ENCODE measurements at regions of chr1 and their contacts with region 1.

Region 1: GRCh38 chr1:85259118-85259911 is at the start of gene C1orf52:
- DNase-seq: peak; percentile 84
- ATAC-seq: peak; percentile 96
- H3K4me3 ChIP-seq: peak within 1 kb of the TSS; percentile 83 to 84
- H3K27ac ChIP-seq: peak within 1 kb of the TSS; percentile 43
- H3K4me1 ChIP-seq: peaks cover 8 to 20% of the 10 kb centered on the region in 2 experiments; a peak in 3 of 4 replicates
- H3K27me3 ChIP-seq: no peaks in the 10 kb centered on the region
- CTCF ChIP-seq: peak; percentile 83 to 93 (median 93)
- POLR2A ChIP-seq: peak; percentile 63
- RAD21 ChIP-seq: peak; percentile 76
- total RNA-seq, gene C1orf52: 23.3 TPM

Region 2: DNA sequence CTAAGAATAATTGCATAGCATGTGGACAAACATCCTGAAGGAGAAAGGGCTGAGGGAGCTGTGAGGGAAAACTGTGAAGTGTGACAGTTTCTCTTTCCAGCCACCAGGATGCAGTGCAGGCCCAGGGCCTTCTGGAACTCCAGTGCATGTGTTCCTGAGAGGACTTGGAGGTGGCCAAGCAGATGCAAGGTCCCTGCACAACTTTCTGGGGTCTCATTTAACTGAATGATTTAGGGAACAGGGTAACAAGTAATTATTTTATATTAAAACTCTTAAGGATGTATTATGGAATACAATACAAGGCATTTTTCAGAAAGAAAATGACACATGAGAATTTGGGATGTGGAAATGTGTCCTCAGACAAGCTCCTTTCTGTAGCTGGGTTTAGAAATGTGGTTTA is 149.8 kb before region 1 on chr1:
- CTCF ChIA-PET with region 1: interaction called, 65 read pairs
- POLR2A ChIA-PET with region 1: no interaction called
- RAD21 ChIA-PET with region 1: interaction called, 4 to 13 read pairs
- intact Hi-C with region 1: loop called (anchors 1 kb)
- DNase-seq: peak; percentile 53
- ATAC-seq: peak; percentile 100
- H3K4me3 ChIP-seq: no peak overlapping the region
- H3K27ac ChIP-seq: no peak overlapping the region
- H3K4me1 ChIP-seq: no peaks in the 10 kb centered on the region
- H3K27me3 ChIP-seq: no peaks in the 10 kb centered on the region
- CTCF ChIP-seq: peak; percentile 77 to 86 (median 85)
- POLR2A ChIP-seq: no peak
- RAD21 ChIP-seq: peak; percentile 89

Region 3: DNA sequence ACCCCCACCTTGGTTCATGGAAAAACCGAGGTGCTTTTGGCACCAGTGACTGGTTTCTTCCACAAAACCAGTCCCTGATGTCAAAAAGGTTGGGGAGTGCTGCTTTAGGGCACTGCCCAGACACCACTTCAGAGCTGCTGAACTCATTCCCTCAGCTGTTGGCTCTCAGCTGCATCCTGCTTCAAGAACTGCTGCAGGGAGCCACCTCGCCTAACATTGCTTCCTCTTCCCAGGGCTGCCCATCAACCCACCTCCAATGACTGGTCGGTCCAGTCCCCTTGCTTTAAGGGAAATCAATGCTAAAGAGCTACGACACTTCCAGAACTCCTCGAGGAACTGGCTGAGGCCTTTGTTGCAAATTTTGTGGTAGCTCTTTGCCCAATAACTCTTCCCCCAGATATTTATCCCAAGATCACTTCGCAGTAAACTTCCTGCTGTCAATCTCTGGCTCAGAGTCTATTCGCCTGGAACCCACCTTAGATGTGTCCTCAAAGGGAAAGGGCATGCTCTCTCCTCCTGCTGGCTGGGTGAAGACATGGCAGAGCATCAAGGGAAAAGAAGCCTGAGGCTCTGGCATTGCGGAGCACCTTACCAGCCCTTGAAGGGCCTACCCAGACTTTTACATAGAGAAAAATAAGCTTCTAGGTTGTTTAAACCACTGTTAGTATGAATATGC is 28.9 kb before region 1 on chr1:
- CTCF ChIA-PET with region 1: interaction called, 14 read pairs
- POLR2A ChIA-PET with region 1: no interaction called
- RAD21 ChIA-PET with region 1: interaction called in 1 of 2 experiments, 3 read pairs
- intact Hi-C with region 1: no loop called
- DNase-seq: peak; percentile 29
- ATAC-seq: peak; percentile 76
- H3K4me3 ChIP-seq: no peak overlapping the region
- H3K27ac ChIP-seq: no peak overlapping the region
- H3K4me1 ChIP-seq: peaks cover 18 to 19% of the 10 kb centered on the region in 2 experiments
- H3K27me3 ChIP-seq: no peaks in the 10 kb centered on the region
- CTCF ChIP-seq: peak; percentile 32 to 63 (median 55); a peak in 5 of 6 replicates
- POLR2A ChIP-seq: no peak
- RAD21 ChIP-seq: peak; percentile 43

Region 4: DNA sequence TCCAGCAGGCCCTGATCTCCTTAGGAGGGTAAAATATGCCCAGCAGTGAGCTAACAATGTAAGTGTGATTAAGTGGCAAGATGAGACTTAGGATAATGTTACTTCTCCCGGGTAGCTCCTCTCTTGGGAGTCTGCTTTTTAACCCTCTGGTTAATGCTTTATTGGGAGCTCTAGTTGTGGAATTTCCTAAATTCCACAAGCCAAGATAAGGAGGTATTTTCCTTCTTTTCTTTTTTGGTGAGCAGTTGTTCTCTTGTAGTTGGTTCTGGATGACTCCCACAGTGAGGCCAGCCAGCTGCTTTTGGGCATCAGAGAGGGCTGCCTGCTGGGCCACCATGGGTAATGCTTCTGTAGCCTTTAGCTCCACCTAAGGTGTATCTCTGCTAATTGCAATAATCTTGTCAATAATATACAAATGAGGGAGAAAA is 19.1 kb before region 1 on chr1:
- CTCF ChIA-PET with region 1: interaction called, 17 read pairs
- POLR2A ChIA-PET with region 1: no interaction called
- RAD21 ChIA-PET with region 1: interaction called in 1 of 2 experiments, 4 read pairs
- intact Hi-C with region 1: no loop called
- DNase-seq: no peak
- ATAC-seq: peak; percentile 90
- H3K4me3 ChIP-seq: no peak overlapping the region
- H3K27ac ChIP-seq: no peak overlapping the region
- H3K4me1 ChIP-seq: peaks cover 4 to 10% of the 10 kb centered on the region in 2 experiments; a peak in 3 of 4 replicates
- H3K27me3 ChIP-seq: no peaks in the 10 kb centered on the region
- CTCF ChIP-seq: peak; percentile 33 to 74 (median 42); a peak in 5 of 6 replicates
- POLR2A ChIP-seq: no peak
- RAD21 ChIP-seq: peak; percentile 87

Region 5: DNA sequence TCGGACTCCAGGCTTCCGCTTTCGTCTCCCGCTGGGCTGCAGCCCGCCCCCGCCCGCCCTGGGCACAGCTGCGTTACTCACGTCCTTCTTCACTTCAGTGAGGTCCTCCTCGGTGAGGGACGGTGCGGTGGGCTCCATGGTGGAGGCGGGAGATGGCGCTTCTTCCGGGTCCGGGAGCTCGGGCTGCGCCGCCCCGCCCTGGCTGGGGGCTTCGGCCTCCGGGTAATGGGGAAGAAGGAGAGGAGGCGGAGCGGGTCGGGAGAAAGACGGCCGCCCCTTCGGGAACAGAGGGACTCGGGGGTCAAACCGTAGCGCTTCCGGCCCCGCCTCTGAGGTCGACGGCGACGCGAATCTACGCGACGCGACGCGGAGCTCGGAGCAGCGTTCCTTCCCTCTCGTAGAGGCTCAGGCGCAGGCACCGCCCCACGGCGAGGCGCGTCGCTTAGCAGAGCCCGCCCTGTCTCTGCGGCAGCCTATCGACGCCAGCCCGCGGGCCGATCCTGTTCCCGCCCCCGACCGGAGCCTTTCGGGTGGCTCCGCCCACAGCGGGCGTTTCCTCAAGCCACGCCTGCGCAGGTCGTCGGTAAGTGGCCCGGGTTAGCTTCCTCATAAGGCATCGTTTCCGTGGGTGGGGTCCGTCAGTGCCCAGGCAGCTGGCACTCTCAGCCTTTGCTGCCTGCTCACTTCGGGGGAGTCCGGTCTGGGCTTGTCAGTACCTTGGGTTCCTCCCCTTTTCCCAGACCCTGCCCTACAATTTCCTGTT is 17.1 kb after region 1 on chr1 and contains the start of gene BCL10:
- CTCF ChIA-PET with region 1: interaction called, 24 read pairs
- POLR2A ChIA-PET with region 1: interaction called, 6 read pairs
- RAD21 ChIA-PET with region 1: interaction called in 1 of 2 experiments, 6 read pairs
- intact Hi-C with region 1: no loop called
- DNase-seq: peak; percentile 96
- ATAC-seq: peak; percentile 98
- H3K4me3 ChIP-seq: peak within 1 kb of the TSS; percentile 67 to 70
- H3K27ac ChIP-seq: peak within 1 kb of the TSS; percentile 67
- H3K4me1 ChIP-seq: peaks cover 16 to 46% of the 10 kb centered on the region in 2 experiments
- H3K27me3 ChIP-seq: no peaks in the 10 kb centered on the region
- CTCF ChIP-seq: no peak
- POLR2A ChIP-seq: peak; percentile 39
- RAD21 ChIP-seq: no peak
- total RNA-seq, gene BCL10: 33.8 TPM

Region 6: GRCh38 chr1:85321237-85321964 is 62.1 kb after region 1 on chr1:
- CTCF ChIA-PET with region 1: no interaction called
- POLR2A ChIA-PET with region 1: no interaction called
- RAD21 ChIA-PET with region 1: no interaction called
- intact Hi-C with region 1: no loop called
- DNase-seq: no peak
- ATAC-seq: no peak; the same call in 1 of the 2 replicates
- H3K4me3 ChIP-seq: no peak overlapping the region
- H3K27ac ChIP-seq: no peak overlapping the region
- H3K4me1 ChIP-seq: peaks cover 21 to 39% of the 10 kb centered on the region in 2 experiments
- H3K27me3 ChIP-seq: no peaks in the 10 kb centered on the region
- CTCF ChIP-seq: no peak
- POLR2A ChIP-seq: no peak
- RAD21 ChIP-seq: no peak